ENCODE measurements at regions of chr11 and their contacts with region 1.

Region 1: GRCh38 chr11:77091146-77091940 is 11.3 kb upstream of the OMP start:
- DNase-seq: peak; percentile 90 to 92
- H3K4me3 ChIP-seq: no peak overlapping the region
- H3K27ac ChIP-seq: peak overlapping the region in 2 of 5 donors; percentile 86
- H3K4me1 ChIP-seq: peaks cover 31 to 88% (median 63%) of the 10 kb centered on the region in 4 donors
- H3K27me3 ChIP-seq: no peaks in the 10 kb centered on the region
- CTCF ChIP-seq: peak in 5 of 7 experiments; percentile 86 to 96 (median 92)
- EP300 ChIP-seq: no peak
- POLR2A ChIP-seq: no peak

Region 2: GRCh38 chr11:77047007-77047927 is 44.1 kb before region 1 on chr11:
- intact Hi-C with region 1: loop called (anchors 5 kb)
- DNase-seq: peak; percentile 74 to 96
- H3K4me3 ChIP-seq: peak overlapping the region; percentile 24 to 44 (median 40)
- H3K27ac ChIP-seq: peak overlapping the region in 4 of 5 donors; percentile 54 to 70 (median 62)
- H3K4me1 ChIP-seq: peaks cover 7 to 25% (median 19%) of the 10 kb centered on the region in 4 donors
- H3K27me3 ChIP-seq: peaks cover 3 to 30% (median 7%) of the 10 kb centered on the region in 3 donors
- CTCF ChIP-seq: peak in 5 of 7 experiments; percentile 65 to 89 (median 74)
- EP300 ChIP-seq: no peak
- POLR2A ChIP-seq: no peak

Measured in stomach (tissue), 19 donors.